Ascending aorta (tissue), 2 donors: ENCODE measurements at regions of chr15 and their contacts with region 1.

Region 1: GRCh38 chr15:39358441-39359041 is 222.3 kb upstream of the THBS1 start:
- DNase-seq: peak in 1 of 2 donors; percentile 73
- H3K4me3 ChIP-seq: no peak overlapping the region
- H3K27ac ChIP-seq: peak overlapping the region in 1 of 2 donors; percentile 52
- H3K4me1 ChIP-seq: peaks cover 0 to 6% of the 10 kb centered on the region in 2 donors
- H3K27me3 ChIP-seq: no peaks in the 10 kb centered on the region
- CTCF ChIP-seq: no peak

Region 2: GRCh38 chr15:39301589-39301999 is 56.9 kb before region 1 on chr15:
- intact Hi-C with region 1: loop called (anchors 5 kb)
- DNase-seq: no peak
- H3K4me3 ChIP-seq: no peak overlapping the region
- H3K27ac ChIP-seq: peak overlapping the region; percentile 52 to 69
- H3K4me1 ChIP-seq: peaks cover 0 to 11% of the 10 kb centered on the region in 2 donors
- H3K27me3 ChIP-seq: no peaks in the 10 kb centered on the region
- CTCF ChIP-seq: no peak

Region 3: DNA sequence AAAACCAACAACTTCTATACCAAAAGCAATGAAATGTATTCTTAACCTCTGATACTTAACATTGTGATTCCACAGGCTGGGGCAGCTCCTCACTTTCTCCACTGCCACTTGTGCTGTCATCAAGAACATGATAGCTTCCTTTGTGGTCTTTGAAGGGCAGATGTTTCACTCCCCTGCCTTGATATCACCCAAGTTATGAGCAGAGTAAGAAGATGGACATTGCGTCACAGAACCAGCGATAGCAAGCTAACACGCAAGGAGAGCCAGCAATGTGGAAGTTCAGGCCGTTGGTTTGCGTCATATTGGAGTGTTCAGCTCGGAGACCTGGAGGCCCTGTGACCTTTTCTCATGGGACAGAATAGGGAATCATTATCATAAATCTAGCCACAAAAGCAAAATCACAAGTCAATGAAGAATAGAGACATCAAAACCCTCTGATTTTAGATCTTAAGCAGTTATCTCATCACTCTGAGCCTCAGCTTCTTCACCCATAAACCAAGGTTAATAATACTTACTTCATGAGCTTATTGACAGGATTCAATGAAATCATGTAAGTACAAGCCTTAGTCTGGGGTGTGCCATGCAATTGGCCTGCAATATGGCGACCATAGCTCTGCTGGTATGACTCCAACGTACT is 38.6 kb after region 1 on chr15:
- intact Hi-C with region 1: no loop called
- DNase-seq: peak in 1 of 2 donors; percentile 21
- H3K4me3 ChIP-seq: no peak overlapping the region
- H3K27ac ChIP-seq: no peak overlapping the region
- H3K4me1 ChIP-seq: no peaks in the 10 kb centered on the region
- H3K27me3 ChIP-seq: no peaks in the 10 kb centered on the region
- CTCF ChIP-seq: no peak